CD8-positive, alpha-beta memory T cell (primary cell): ENCODE measurements at regions of chr5 and their contacts with region 1.

Region 1: GRCh38 chr5:54733101-54733500 is 215.5 kb downstream of the SNX18 start:
- DNase-seq: no peak
- H3K4me3 ChIP-seq: no peak overlapping the region
- H3K4me3 Mint-ChIP-seq: no peak overlapping the region
- H3K27ac ChIP-seq: no peak overlapping the region
- H3K27ac Mint-ChIP-seq: no peak overlapping the region
- H3K4me1 ChIP-seq: no peaks in the 10 kb centered on the region
- H3K4me1 Mint-ChIP-seq: no peaks in the 10 kb centered on the region
- H3K27me3 ChIP-seq: no peaks in the 10 kb centered on the region
- H3K27me3 Mint-ChIP-seq: peaks cover 0 to 3% of the 10 kb centered on the region in 2 donors

Region 2: GRCh38 chr5:54743997-54744788 is 11.1 kb after region 1 on chr5:
- CTCF ChIA-PET with region 1: interaction called, 10 read pairs
- POLR2A ChIA-PET with region 1: interaction called, 3 read pairs
- DNase-seq: peak; percentile 17 to 73 (median 48)
- H3K4me3 ChIP-seq: no peak overlapping the region
- H3K4me3 Mint-ChIP-seq: peak overlapping the region; percentile 1 to 77 (median 55)
- H3K27ac ChIP-seq: peak overlapping the region; percentile 44
- H3K27ac Mint-ChIP-seq: peak overlapping the region; percentile 18 to 93 (median 83)
- H3K4me1 ChIP-seq: peaks cover 37% of the 10 kb centered on the region
- H3K4me1 Mint-ChIP-seq: peaks cover 36 to 55% (median 47%) of the 10 kb centered on the region in 3 donors
- H3K27me3 ChIP-seq: no peaks in the 10 kb centered on the region
- H3K27me3 Mint-ChIP-seq: peaks cover 0 to 2% of the 10 kb centered on the region in 2 donors

Region 3: DNA sequence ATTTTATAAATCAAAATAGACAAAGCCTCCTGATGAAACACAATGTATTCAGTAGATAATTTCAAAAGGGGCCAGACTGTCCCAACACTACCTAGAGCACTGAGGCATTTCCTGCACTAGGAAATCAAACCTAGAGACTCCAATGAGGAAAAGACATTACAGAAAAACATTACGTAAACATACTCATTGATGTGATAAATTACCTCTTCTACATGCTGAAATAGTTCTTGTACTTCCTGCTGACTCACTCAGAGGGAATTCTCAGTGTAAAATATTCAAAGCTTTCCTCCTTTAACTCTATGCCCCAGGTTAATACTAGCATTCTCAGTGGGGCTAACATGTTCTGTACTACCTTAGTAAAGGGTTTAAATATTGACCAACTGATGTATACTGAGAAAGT is 74.3 kb after region 1 on chr5:
- CTCF ChIA-PET with region 1: no interaction called
- POLR2A ChIA-PET with region 1: no interaction called
- DNase-seq: no peak
- H3K4me3 ChIP-seq: no peak overlapping the region
- H3K4me3 Mint-ChIP-seq: no peak overlapping the region
- H3K27ac ChIP-seq: no peak overlapping the region
- H3K27ac Mint-ChIP-seq: no peak overlapping the region
- H3K4me1 ChIP-seq: no peaks in the 10 kb centered on the region
- H3K4me1 Mint-ChIP-seq: no peaks in the 10 kb centered on the region
- H3K27me3 ChIP-seq: no peaks in the 10 kb centered on the region
- H3K27me3 Mint-ChIP-seq: peaks cover 2 to 6% of the 10 kb centered on the region in 2 donors